ENCODE measurements at regions of chr1 and their contacts with region 1.

Region 1: GRCh38 chr1:231931846-231932454 is 305.4 kb downstream of the DISC1 start:
- DNase-seq: no peak
- ATAC-seq: no peak
- H3K4me3 ChIP-seq: no peak overlapping the region
- H3K27ac ChIP-seq: no peak overlapping the region
- H3K4me1 ChIP-seq: peaks cover 8 to 80% (median 61%) of the 10 kb centered on the region in 12 donors
- H3K27me3 ChIP-seq: no peaks in the 10 kb centered on the region
- CTCF ChIP-seq: peak; percentile 19 to 54 (median 36)
- POLR2A ChIP-seq: no peak

Region 2: DNA sequence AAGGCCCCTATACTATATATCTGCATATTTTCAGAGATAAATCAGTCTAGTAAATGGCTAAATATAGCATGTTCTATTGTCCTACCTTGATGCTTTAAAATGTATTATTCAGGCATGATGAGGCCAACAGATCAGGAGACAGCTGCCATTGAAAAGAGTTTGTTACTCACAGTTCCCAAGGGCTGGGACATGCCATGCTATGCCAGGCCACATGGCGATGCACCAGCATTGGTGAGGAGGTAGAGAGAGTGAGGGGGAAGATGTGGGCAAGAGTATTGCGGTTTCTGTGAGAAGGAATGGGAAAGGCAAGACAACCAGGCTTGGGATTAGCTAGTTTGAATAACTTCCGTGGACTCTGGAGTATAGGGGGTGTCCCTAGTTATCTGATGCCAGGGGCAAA is 11.1 kb after region 1 on chr1:
- intact Hi-C with region 1: no loop called
- DNase-seq: no peak
- ATAC-seq: no peak
- H3K4me3 ChIP-seq: no peak overlapping the region
- H3K27ac ChIP-seq: no peak overlapping the region
- H3K4me1 ChIP-seq: peaks cover 0 to 2% (median 0%) of the 10 kb centered on the region in 12 donors
- H3K27me3 ChIP-seq: no peaks in the 10 kb centered on the region
- CTCF ChIP-seq: no peak
- POLR2A ChIP-seq: no peak

Region 3: DNA sequence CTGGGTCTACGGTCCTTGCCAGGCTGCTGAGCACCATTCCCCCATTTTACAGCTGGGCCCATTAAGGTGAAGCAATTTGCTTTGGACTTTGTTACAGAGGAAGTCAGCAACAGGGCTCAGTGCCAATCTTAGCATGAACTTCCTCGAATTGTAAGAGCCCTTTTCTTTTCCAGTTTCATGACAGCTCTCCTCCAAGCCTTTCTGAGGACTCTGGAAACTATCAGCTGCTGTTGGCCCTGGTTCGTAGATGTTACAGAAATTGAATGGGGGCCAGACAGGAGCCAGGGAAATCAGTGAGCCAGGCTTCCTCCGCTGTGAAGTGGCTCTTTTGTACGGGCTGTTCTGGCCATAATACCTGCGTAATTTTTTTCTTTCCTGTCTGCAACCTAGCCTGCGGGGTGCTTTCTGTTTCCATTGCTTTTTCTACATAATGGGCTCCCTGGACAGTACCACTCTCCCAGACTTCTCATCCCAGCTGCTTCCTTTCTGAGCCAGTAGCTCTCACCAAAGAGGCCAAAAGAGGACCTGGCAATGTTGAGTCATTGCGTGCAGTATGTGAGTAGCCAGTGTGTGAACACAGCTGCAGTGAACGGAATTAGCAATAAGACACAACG is 80.9 kb after region 1 on chr1:
- intact Hi-C with region 1: loop called in 2 of 10 experiments (anchors 2 to 5 kb)
- DNase-seq: peak in 4 of 5 donors; percentile 68 to 82 (median 70)
- ATAC-seq: peak; percentile 86 to 97 (median 94)
- H3K4me3 ChIP-seq: peak overlapping the region in 10 of 12 donors; percentile 1 to 38 (median 18)
- H3K27ac ChIP-seq: peak overlapping the region; percentile 53 to 74 (median 67)
- H3K4me1 ChIP-seq: peaks cover 0 to 38% (median 17%) of the 10 kb centered on the region in 12 donors
- H3K27me3 ChIP-seq: no peaks in the 10 kb centered on the region
- CTCF ChIP-seq: no peak
- POLR2A ChIP-seq: no peak

Region 4: DNA sequence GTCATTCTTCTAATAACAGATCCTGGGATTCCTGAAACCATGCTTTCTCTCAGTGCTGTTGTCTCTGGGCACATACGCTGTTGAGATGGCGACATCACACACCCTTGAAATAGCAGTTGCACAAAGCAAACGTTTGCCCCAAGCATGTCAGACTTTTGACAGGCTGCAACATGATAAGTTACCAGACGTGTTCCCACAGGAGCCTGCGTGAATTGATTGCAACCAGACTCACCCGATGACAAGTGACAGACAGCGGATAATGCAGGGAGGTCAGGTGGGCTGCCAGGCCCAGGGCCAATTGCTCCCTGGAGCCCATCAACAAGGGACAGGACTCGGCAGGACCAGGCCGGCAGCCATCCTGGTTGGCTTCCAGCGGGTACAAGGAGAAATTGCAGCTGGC is 387.1 kb after region 1 on chr1:
- intact Hi-C with region 1: loop called in 1 of 10 experiments (anchors 5 kb)
- DNase-seq: peak; percentile 87 to 95 (median 89)
- ATAC-seq: peak; percentile 95 to 96 (median 96)
- H3K4me3 ChIP-seq: no peak overlapping the region
- H3K27ac ChIP-seq: peak overlapping the region in 11 of 12 donors; percentile 5 to 95 (median 79)
- H3K4me1 ChIP-seq: peaks cover 0 to 17% (median 11%) of the 10 kb centered on the region in 12 donors
- H3K27me3 ChIP-seq: no peaks in the 10 kb centered on the region
- CTCF ChIP-seq: no peak
- POLR2A ChIP-seq: no peak